ENCODE measurements at regions of chr4 and their contacts with region 1.

Region 1: GRCh38 chr4:17544205-17544604 is 29.2 kb downstream of the CLRN2 start:
- DNase-seq: no peak
- H3K4me3 ChIP-seq: no peak overlapping the region
- CTCF ChIP-seq: no peak

Region 2: GRCh38 chr4:17218786-17219185 is 325.4 kb before region 1 on chr4:
- CTCF ChIA-PET with region 1: no interaction called
- POLR2A ChIA-PET with region 1: no interaction called
- DNase-seq: no peak
- H3K4me3 ChIP-seq: no peak overlapping the region
- CTCF ChIP-seq: no peak

Region 3: GRCh38 chr4:17324386-17324830 is 219.8 kb before region 1 on chr4:
- CTCF ChIA-PET with region 1: no interaction called
- POLR2A ChIA-PET with region 1: no interaction called
- DNase-seq: peak; percentile 9
- H3K4me3 ChIP-seq: no peak overlapping the region
- CTCF ChIP-seq: peak; percentile 46

Region 4: DNA sequence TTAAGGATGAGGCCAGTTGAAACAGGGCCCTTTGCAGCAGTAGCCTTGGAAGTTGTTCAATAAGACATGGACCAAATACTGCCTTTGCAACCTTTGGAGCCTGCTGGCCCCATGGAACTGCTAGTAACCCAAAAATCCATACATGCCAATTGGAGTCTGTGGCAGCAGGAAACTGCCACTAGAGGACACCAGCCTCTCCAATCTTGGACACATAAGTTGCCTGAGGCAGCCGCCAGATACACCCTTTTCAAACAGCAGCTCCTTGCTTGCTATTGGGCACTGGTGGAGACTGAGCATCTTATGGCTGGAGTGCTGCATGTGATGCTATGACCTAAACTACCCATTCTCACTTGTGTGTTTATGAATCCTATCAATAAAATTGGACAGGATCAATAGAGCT is 18.0 kb after region 1 on chr4:
- CTCF ChIA-PET with region 1: interaction called, 14 read pairs
- POLR2A ChIA-PET with region 1: no interaction called
- DNase-seq: no peak
- H3K4me3 ChIP-seq: no peak overlapping the region
- CTCF ChIP-seq: no peak

Region 5: GRCh38 chr4:17614416-17615299 is 70.5 kb after region 1 on chr4 and contains the start of gene MED28:
- CTCF ChIA-PET with region 1: interaction called, 21 read pairs
- POLR2A ChIA-PET with region 1: no interaction called
- DNase-seq: peak; percentile 67
- H3K4me3 ChIP-seq: peak within 1 kb of the TSS; percentile 85
- CTCF ChIP-seq: no peak

Region 6: GRCh38 chr4:17642404-17642783 is 98.2 kb after region 1 on chr4:
- CTCF ChIA-PET with region 1: interaction called, 105 read pairs
- POLR2A ChIA-PET with region 1: no interaction called
- DNase-seq: no peak
- H3K4me3 ChIP-seq: no peak overlapping the region
- CTCF ChIP-seq: no peak

Region 7: GRCh38 chr4:18593445-18594002 is 1049.3 kb after region 1 on chr4:
- CTCF ChIA-PET with region 1: interaction called, 14 read pairs
- POLR2A ChIA-PET with region 1: no interaction called
- DNase-seq: peak; percentile 12
- H3K4me3 ChIP-seq: peak overlapping the region; percentile 15; the same call in 1 of the 2 replicates
- CTCF ChIP-seq: peak; percentile 68